ENCODE measurements at regions of chr11 and their contacts with region 1.

Region 1: GRCh38 chr11:73423506-73423905 is 47.3 kb downstream of the RELT start:
- DNase-seq: no peak
- ATAC-seq: no peak
- H3K4me3 ChIP-seq: no peak overlapping the region
- H3K27ac ChIP-seq: no peak overlapping the region
- H3K4me1 ChIP-seq: no peaks in the 10 kb centered on the region
- H3K27me3 ChIP-seq: no peaks in the 10 kb centered on the region
- CTCF ChIP-seq: no peak

Region 2: DNA sequence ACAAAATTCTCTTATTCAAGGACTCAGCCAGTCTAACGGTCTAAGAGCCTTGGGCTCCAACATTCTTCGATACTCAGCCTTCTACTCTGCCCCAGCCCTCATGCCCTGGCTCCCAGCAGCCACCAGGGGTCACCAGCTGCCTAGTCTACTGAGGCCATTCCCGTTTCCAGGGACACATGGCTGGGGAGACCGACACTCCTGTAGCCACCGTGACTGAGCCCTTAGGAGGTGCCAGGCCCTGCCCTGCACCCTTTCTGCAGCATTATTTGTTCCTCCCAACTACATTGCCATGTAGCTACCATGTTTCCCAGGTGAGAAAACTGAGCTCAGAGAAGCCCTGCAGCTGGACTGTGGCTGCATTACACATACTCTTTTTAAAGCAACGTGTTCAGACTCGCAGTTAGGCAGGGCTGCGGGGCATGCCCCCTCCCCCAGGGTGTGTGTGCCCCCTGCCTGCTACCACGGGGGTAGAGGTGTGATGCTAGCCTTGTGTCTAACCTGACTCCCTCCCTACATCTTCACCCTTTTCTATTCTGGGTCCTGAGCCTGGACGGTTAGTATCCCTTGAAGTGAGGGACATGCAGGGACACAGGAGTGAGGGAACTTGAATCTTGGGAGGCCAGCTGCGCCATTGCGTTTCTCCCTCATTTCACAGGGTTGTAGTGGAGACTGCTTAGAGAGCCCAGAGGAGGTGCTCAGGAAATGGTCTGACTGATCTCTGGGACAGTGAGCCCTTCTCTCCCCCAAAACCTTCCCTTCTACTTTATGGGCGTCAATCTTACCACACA is 591.8 kb before region 1 on chr11:
- CTCF ChIA-PET with region 1: no interaction called
- POLR2A ChIA-PET with region 1: no interaction called
- in situ Hi-C with region 1: no loop called
- intact Hi-C with region 1: no loop called
- DNase-seq: peak; percentile 42
- ATAC-seq: peak; percentile 96
- H3K4me3 ChIP-seq: no peak overlapping the region
- H3K27ac ChIP-seq: 0 out of 2 replicates have a peak overlapping the region, but pooled peaks have one; percentile 13
- H3K4me1 ChIP-seq: 0 out of 2 replicates have a peak, but pooled peaks cover 4% of the 10 kb centered on the region
- H3K27me3 ChIP-seq: no peaks in the 10 kb centered on the region
- CTCF ChIP-seq: peak; percentile 98

Region 3: GRCh38 chr11:73439002-73439843 is 15.7 kb after region 1 on chr11:
- CTCF ChIA-PET with region 1: no interaction called
- POLR2A ChIA-PET with region 1: interaction called, 11 read pairs
- in situ Hi-C with region 1: no loop called
- intact Hi-C with region 1: no loop called
- DNase-seq: no peak
- ATAC-seq: no peak
- H3K4me3 ChIP-seq: no peak overlapping the region
- H3K27ac ChIP-seq: no peak overlapping the region
- H3K4me1 ChIP-seq: no peaks in the 10 kb centered on the region
- H3K27me3 ChIP-seq: no peaks in the 10 kb centered on the region
- CTCF ChIP-seq: no peak